Pancreas (tissue), 10 donors: ENCODE measurements at regions of chr12 and their contacts with region 1.

Region 1: DNA sequence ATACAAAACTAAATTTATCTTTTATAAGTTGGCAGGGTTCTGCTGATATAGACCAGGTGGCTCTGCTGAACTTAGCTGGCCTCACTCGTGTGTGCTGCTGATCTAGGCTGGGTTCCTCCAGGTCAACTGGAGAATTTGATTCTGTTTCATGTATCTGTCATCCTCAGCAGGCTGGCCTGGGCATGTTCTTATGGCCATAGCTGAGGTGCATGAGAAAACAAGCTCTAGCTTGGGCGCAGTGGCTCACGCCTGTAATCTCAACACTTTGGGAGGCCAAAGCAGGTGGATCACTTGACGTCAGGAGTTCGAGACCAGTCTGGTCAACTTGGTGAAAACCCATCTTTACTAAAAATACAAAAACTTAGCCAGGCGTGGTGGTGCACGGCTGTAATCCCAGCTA is 24.3 kb upstream of the BCL2L14 start:
- DNase-seq: no peak
- ATAC-seq: no peak
- H3K4me3 ChIP-seq: no peak overlapping the region
- H3K27ac ChIP-seq: no peak overlapping the region
- H3K4me1 ChIP-seq: no peaks in the 10 kb centered on the region
- H3K27me3 ChIP-seq: no peaks in the 10 kb centered on the region
- CTCF ChIP-seq: no peak

Region 2: GRCh38 chr12:11576104-11576503 is 470.3 kb before region 1 on chr12:
- intact Hi-C with region 1: loop called in 1 of 3 experiments (anchors 10 kb)
- DNase-seq: no peak
- ATAC-seq: no peak
- H3K4me3 ChIP-seq: no peak overlapping the region
- H3K27ac ChIP-seq: no peak overlapping the region
- H3K4me1 ChIP-seq: no peaks in the 10 kb centered on the region
- H3K27me3 ChIP-seq: no peaks in the 10 kb centered on the region
- CTCF ChIP-seq: no peak

Region 3: DNA sequence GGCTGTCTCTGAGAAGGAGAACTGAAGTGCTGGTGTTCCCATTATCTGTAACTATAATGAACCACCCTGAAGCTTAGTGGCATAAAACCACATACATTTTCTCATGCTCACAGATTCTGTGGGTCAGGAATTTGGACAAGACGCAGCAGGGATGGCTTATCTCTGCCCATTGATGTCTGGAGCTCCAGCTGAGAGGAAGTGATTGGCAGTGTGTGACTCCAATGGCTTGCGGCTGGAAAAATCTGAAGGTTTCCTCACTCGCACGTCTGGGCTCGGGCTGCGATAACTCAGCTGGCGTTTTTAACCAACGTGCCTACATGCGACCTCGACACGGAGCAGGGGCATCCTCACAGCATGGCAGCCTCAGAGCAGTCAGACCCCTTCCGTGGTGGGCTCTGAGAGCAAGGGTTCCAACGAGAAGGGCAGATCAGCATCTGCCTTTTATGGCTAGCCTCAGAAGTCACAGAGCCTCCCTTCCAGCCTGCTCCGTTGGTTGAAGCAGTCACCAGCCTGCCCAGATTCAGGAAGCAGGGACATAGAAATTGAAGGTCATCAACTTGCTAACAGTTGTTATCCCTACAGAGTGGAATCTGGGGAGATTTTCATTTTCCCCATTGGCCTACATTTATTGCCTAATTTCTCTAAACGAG is 119.0 kb before region 1 on chr12:
- intact Hi-C with region 1: no loop called
- DNase-seq: no peak
- ATAC-seq: no peak
- H3K4me3 ChIP-seq: no peak overlapping the region
- H3K27ac ChIP-seq: no peak overlapping the region
- H3K4me1 ChIP-seq: no peaks in the 10 kb centered on the region
- H3K27me3 ChIP-seq: no peaks in the 10 kb centered on the region
- CTCF ChIP-seq: no peak

Region 4: GRCh38 chr12:12716793-12717585 is 670.6 kb after region 1 on chr12 and contains the start of gene CDKN1B:
- intact Hi-C with region 1: no loop called
- DNase-seq: peak; percentile 93 to 96 (median 96)
- ATAC-seq: peak; percentile 84 to 90 (median 90)
- H3K4me3 ChIP-seq: peak within 1 kb of the TSS; percentile 75 to 89 (median 82)
- H3K27ac ChIP-seq: peak within 1 kb of the TSS; percentile 98 to 100 (median 99)
- H3K4me1 ChIP-seq: peaks cover 10 to 49% (median 45%) of the 10 kb centered on the region in 3 donors
- H3K27me3 ChIP-seq: no peaks in the 10 kb centered on the region
- CTCF ChIP-seq: no peak
- total RNA-seq, gene CDKN1B: 12.8 to 23.7 (median 16.9) TPM